ENCODE measurements at regions of chr5 and their contacts with region 1.

Region 1: GRCh38 chr5:172006321-172007174 is at the start of gene FBXW11:
- DNase-seq: peak; percentile 93 to 98 (median 94)
- H3K4me3 ChIP-seq: peak within 1 kb of the TSS; percentile 100
- H3K4me3 Mint-ChIP-seq: peak within 1 kb of the TSS; percentile 89 to 97 (median 95)
- H3K27ac ChIP-seq: peak within 1 kb of the TSS; percentile 97
- H3K27ac Mint-ChIP-seq: peak within 1 kb of the TSS; percentile 89 to 100 (median 98)
- H3K4me1 ChIP-seq: peaks cover 49% of the 10 kb centered on the region
- H3K4me1 Mint-ChIP-seq: peaks cover 48 to 59% (median 56%) of the 10 kb centered on the region in 3 donors
- H3K27me3 ChIP-seq: no peaks in the 10 kb centered on the region
- H3K27me3 Mint-ChIP-seq: no peaks in the 10 kb centered on the region
- total RNA-seq, gene FBXW11: 44.7 to 46.9 TPM

Region 2: GRCh38 chr5:171913987-171914273 is 92.6 kb before region 1 on chr5:
- CTCF ChIA-PET with region 1: interaction called, 17 read pairs
- POLR2A ChIA-PET with region 1: interaction called, 3 read pairs
- DNase-seq: no peak
- H3K4me3 ChIP-seq: no peak overlapping the region
- H3K4me3 Mint-ChIP-seq: no peak overlapping the region
- H3K27ac ChIP-seq: no peak overlapping the region
- H3K27ac Mint-ChIP-seq: peak overlapping the region in 4 of 8 donors; percentile 30 to 73 (median 52)
- H3K4me1 ChIP-seq: peaks cover 11% of the 10 kb centered on the region
- H3K4me1 Mint-ChIP-seq: peaks cover 44 to 60% (median 57%) of the 10 kb centered on the region in 3 donors
- H3K27me3 ChIP-seq: no peaks in the 10 kb centered on the region
- H3K27me3 Mint-ChIP-seq: no peaks in the 10 kb centered on the region

Region 3: DNA sequence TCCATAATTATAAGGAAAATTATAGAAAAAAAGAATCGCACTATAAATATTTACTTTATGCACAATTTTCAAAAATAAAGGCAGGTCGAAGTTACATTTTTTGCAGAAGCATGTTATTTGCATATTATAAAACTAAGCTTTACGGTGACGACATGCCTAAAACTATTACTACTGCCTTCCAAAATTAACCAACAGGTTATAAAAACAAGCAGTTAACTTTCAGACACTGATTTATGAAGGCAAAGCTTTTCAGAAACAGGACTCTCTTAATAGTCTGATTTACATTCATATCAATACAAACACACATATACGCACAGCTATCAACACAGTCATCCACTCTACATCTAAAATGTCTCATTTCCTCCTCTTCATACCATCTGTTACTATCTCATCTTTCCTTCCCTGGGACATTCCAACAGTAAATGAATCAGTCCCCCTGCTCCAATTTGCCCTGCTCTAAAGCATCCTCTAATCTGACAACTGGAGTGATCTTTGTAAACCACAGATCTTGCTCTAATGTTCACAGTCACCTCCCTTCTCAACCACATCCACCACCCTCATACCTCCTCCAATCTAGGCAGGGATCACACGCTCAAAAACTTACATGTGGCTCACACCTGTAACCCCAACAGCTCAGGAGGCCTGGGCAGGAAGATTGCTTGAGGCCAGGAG is 21.7 kb before region 1 on chr5:
- CTCF ChIA-PET with region 1: interaction called, 6 read pairs
- POLR2A ChIA-PET with region 1: interaction called, 17 read pairs
- DNase-seq: peak; percentile 15 to 79 (median 28)
- H3K4me3 ChIP-seq: no peak overlapping the region
- H3K4me3 Mint-ChIP-seq: peak overlapping the region in 3 of 7 donors; percentile 8 to 64 (median 12)
- H3K27ac ChIP-seq: no peak overlapping the region
- H3K27ac Mint-ChIP-seq: peak overlapping the region in 7 of 8 donors; percentile 4 to 97 (median 26)
- H3K4me1 ChIP-seq: peaks cover 28% of the 10 kb centered on the region
- H3K4me1 Mint-ChIP-seq: peaks cover 50 to 63% (median 54%) of the 10 kb centered on the region in 3 donors
- H3K27me3 ChIP-seq: no peaks in the 10 kb centered on the region
- H3K27me3 Mint-ChIP-seq: no peaks in the 10 kb centered on the region

Region 4: GRCh38 chr5:172065501-172065990 is 59.0 kb after region 1 on chr5:
- CTCF ChIA-PET with region 1: interaction called, 3 read pairs
- POLR2A ChIA-PET with region 1: interaction called, 13 read pairs
- DNase-seq: no peak
- H3K4me3 ChIP-seq: no peak overlapping the region
- H3K4me3 Mint-ChIP-seq: peak overlapping the region in 5 of 7 donors; percentile 28 to 84 (median 73)
- H3K27ac ChIP-seq: no peak overlapping the region
- H3K27ac Mint-ChIP-seq: peak overlapping the region in 6 of 8 donors; percentile 69 to 99 (median 93)
- H3K4me1 ChIP-seq: peaks cover 56% of the 10 kb centered on the region
- H3K4me1 Mint-ChIP-seq: peaks cover 60 to 72% (median 71%) of the 10 kb centered on the region in 3 donors
- H3K27me3 ChIP-seq: no peaks in the 10 kb centered on the region
- H3K27me3 Mint-ChIP-seq: peaks cover 0 to 2% of the 10 kb centered on the region in 2 donors

Region 5: GRCh38 chr5:172293054-172293744 is 286.7 kb after region 1 on chr5:
- CTCF ChIA-PET with region 1: interaction called, 10 read pairs
- POLR2A ChIA-PET with region 1: no interaction called
- DNase-seq: peak; percentile 33 to 72 (median 58)
- H3K4me3 ChIP-seq: no peak overlapping the region
- H3K4me3 Mint-ChIP-seq: no peak overlapping the region
- H3K27ac ChIP-seq: no peak overlapping the region
- H3K27ac Mint-ChIP-seq: no peak overlapping the region
- H3K4me1 ChIP-seq: no peaks in the 10 kb centered on the region
- H3K4me1 Mint-ChIP-seq: peaks cover 0 to 4% (median 2%) of the 10 kb centered on the region in 3 donors
- H3K27me3 ChIP-seq: no peaks in the 10 kb centered on the region
- H3K27me3 Mint-ChIP-seq: peaks cover 0 to 7% of the 10 kb centered on the region in 2 donors

Measured in CD8-positive, alpha-beta memory T cell (primary cell).